Activated T-helper 2 cell treated with anti-CD3 and anti-CD28 coated beads, Interferon-gamma antibody, Interleukin-2, Interleukin-4, amounts not matched to agents 10 μg/mL and 5 μg/mL and 100 μg/mL, durations not matched to agents 14 hours and 24 hours and 36 hours (primary cell): ENCODE measurements at regions of chr16 and their contacts with region 1.

Region 1: DNA sequence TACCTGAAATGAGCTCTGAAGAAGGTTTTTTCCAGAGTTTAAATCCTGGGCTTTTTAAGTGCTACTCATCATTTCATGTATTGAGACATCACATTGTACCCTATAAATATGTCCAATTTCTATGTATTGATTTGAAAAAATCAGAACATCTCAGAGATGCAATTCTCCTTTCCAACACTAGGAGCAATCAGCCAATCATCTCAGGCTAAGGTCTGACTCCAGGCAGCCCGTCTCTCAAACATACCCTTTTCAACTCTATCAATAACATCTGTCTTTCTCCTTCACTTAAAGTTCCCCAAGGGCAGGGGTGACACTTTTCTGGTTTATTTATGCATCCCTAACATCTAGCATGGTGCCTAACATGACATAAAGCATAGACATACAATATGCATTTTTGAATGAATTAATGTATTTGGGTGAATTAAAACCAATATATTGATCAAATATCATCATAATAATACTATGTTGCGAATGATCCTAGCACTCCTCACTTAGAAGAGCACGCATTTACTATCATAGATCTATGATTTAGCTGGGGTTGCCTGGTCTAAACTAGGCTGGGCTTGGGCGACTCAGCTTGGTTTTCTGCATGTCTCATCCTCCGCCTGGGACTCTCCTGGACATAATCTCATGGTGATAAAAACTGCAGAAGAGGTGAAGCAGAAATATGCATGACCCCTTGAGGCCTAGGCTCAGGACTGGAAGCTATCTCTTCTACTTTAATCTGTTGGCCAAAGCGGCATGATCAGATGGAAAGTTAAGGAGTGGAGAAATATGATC is 5.2 kb upstream of the CDH11 start:
- DNase-seq: no peak
- H3K4me3 Mint-ChIP-seq: no peak overlapping the region
- H3K27ac Mint-ChIP-seq: no peak overlapping the region
- H3K4me1 Mint-ChIP-seq: no peaks in the 10 kb centered on the region
- H3K27me3 Mint-ChIP-seq: peaks cover 15% of the 10 kb centered on the region

Region 2: GRCh38 chr16:65154321-65154720 is 27.3 kb after region 1 on chr16:
- intact Hi-C with region 1: no loop called
- DNase-seq: no peak
- H3K4me3 Mint-ChIP-seq: no peak overlapping the region
- H3K27ac Mint-ChIP-seq: no peak overlapping the region
- H3K4me1 Mint-ChIP-seq: no peaks in the 10 kb centered on the region
- H3K27me3 Mint-ChIP-seq: no peaks in the 10 kb centered on the region

Region 3: GRCh38 chr16:65213866-65214595 is 87.0 kb after region 1 on chr16:
- intact Hi-C with region 1: no loop called
- DNase-seq: no peak
- H3K4me3 Mint-ChIP-seq: no peak overlapping the region
- H3K27ac Mint-ChIP-seq: no peak overlapping the region
- H3K4me1 Mint-ChIP-seq: no peaks in the 10 kb centered on the region
- H3K27me3 Mint-ChIP-seq: no peaks in the 10 kb centered on the region

Region 4: GRCh38 chr16:65274566-65274965 is 147.5 kb after region 1 on chr16:
- intact Hi-C with region 1: no loop called
- DNase-seq: no peak
- H3K4me3 Mint-ChIP-seq: no peak overlapping the region
- H3K27ac Mint-ChIP-seq: no peak overlapping the region
- H3K4me1 Mint-ChIP-seq: no peaks in the 10 kb centered on the region
- H3K27me3 Mint-ChIP-seq: no peaks in the 10 kb centered on the region

Region 5: DNA sequence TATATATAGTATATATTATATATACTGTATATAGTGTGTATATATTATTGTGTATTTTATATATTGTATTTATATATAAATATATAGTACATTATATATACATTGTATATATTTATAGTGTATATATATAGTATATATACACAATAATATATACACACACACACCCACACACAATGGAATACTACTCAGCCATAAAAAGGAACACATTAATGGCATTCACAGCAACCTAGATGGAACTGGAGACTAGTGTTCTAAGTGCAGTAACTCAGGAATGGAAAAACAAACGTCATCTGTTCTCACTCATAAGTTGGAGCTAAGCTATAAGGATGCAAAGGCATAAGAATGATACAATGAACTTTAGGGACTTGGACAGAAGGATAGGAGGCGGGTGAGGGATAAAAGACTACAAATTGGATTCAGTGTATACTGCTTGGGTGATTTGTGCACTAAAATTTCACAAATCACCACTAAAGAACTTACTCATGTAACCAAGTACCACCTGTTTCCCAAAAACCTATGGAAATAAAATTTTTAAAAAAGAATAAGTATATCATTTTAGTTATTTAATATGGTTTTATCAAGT is 196.7 kb after region 1 on chr16:
- intact Hi-C with region 1: loop called (anchors 5 kb)
- DNase-seq: no peak
- H3K4me3 Mint-ChIP-seq: no peak overlapping the region
- H3K27ac Mint-ChIP-seq: no peak overlapping the region
- H3K4me1 Mint-ChIP-seq: no peaks in the 10 kb centered on the region
- H3K27me3 Mint-ChIP-seq: no peaks in the 10 kb centered on the region